ENCODE measurements at regions of chr16 and their contacts with region 1.

Region 1: GRCh38 chr16:29023279-29024277 is 38.7 kb downstream of the LAT start:
- DNase-seq: no peak
- H3K4me3 Mint-ChIP-seq: no peak overlapping the region
- H3K27ac Mint-ChIP-seq: peak overlapping the region; percentile 45
- H3K4me1 Mint-ChIP-seq: peaks cover 68% of the 10 kb centered on the region
- H3K27me3 Mint-ChIP-seq: no peaks in the 10 kb centered on the region

Region 2: DNA sequence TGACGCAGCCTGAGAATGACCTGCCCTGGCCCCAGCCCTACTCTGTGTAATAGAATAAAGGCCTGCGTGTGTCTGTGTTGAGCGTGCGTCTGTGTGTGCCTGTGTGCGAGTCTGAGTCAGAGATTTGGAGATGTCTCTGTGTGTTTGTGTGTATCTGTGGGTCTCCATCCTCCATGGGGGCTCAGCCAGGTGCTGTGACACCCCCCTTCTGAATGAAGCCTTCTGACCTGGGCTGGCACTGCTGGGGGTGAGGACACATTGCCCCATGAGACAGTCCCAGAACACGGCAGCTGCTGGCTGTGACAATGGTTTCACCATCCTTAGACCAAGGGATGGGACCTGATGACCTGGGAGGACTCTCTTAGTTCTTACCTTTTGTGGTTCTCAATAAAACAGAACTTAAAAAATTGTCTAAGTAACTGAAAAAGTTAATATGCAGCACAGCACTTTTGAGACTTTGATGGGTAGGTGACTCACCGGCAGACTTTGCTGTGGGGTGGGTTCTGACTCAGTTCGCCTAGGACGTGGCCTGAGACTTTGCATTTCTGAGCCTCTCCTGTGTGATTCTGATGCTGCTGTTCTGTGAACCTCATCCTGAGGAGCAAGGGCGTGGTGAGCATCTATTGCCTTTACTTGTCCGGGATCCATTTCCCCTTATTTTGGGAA is 33.1 kb before region 1 on chr16:
- CTCF ChIA-PET with region 1: interaction called, 4 read pairs
- POLR2A ChIA-PET with region 1: interaction called, 9 read pairs
- intact Hi-C with region 1: loop called (anchors 1 kb)
- DNase-seq: peak; percentile 89
- H3K4me3 Mint-ChIP-seq: peak overlapping the region; percentile 69
- H3K27ac Mint-ChIP-seq: peak overlapping the region; percentile 98
- H3K4me1 Mint-ChIP-seq: peaks cover 50% of the 10 kb centered on the region
- H3K27me3 Mint-ChIP-seq: no peaks in the 10 kb centered on the region

Region 3: DNA sequence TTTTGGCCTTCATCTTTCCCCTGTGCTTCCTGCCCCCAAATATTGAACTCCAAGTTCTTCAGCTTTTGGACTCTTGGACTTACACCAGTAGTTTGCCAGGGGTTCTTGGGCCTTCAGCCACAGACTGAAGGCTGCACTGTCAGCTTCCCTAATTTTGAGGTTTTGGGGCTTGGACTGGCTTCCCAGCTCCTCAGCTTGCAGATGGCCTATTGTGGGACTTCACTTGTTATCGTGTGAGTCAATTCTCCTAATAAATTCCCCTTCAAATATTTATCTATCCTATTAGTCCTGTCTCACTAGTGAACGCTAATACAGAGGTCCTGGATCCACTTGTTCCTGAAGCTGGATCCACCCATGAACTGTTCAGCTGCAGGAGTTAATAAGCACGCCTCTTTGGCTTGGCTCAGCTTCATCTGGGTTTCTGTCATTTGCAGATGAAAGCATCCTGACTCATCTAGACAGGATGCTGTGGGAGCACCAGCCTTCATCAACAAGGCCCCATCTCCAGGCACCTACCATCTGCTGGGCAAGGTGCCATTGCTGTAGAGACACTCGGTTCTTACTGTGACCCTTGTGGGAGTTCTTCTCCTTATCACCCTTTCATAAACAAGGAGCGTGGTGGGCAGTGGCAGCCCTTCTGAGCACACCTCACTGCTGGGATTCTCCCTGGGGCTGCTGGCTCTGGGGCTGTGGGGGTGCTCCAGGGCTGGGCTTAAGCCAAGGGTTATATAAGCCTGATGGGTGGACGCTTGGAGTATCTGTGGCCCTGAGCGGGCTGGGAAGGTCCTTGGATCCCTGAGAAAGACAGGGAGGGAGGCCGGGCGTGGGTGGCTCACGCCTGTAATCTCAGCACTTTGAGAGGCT is 15.6 kb before region 1 on chr16:
- CTCF ChIA-PET with region 1: interaction called, 9 read pairs
- POLR2A ChIA-PET with region 1: interaction called, 18 read pairs
- intact Hi-C with region 1: loop called (anchors 1 kb)
- DNase-seq: peak; percentile 89
- H3K4me3 Mint-ChIP-seq: peak overlapping the region; percentile 34
- H3K27ac Mint-ChIP-seq: peak overlapping the region; percentile 88
- H3K4me1 Mint-ChIP-seq: peaks cover 54% of the 10 kb centered on the region
- H3K27me3 Mint-ChIP-seq: no peaks in the 10 kb centered on the region

Region 4: GRCh38 chr16:29012913-29013553 is 10.5 kb before region 1 on chr16:
- CTCF ChIA-PET with region 1: interaction called, 9 read pairs
- POLR2A ChIA-PET with region 1: interaction called, 18 read pairs
- intact Hi-C with region 1: loop called (anchors 1 kb)
- DNase-seq: peak; percentile 55
- H3K4me3 Mint-ChIP-seq: no peak overlapping the region
- H3K27ac Mint-ChIP-seq: peak overlapping the region; percentile 90
- H3K4me1 Mint-ChIP-seq: peaks cover 62% of the 10 kb centered on the region
- H3K27me3 Mint-ChIP-seq: no peaks in the 10 kb centered on the region